Posterior cingulate gyrus (tissue), 11 donors: ENCODE measurements at regions of chr1 and their contacts with region 1.

Region 1: GRCh38 chr1:230978491-230979388 is at the starts of genes ARV1 and TTC13:
- DNase-seq: peak; percentile 93 to 100 (median 99)

Region 2: GRCh38 chr1:230797942-230798418 is 180.8 kb before region 1 on chr1:
- intact Hi-C with region 1: loop called (anchors 5 kb)
- DNase-seq: peak; percentile 49 to 95 (median 73)